Calu3 (cell line): ENCODE measurements at regions of chr11 and their contacts with region 1.

Region 1: DNA sequence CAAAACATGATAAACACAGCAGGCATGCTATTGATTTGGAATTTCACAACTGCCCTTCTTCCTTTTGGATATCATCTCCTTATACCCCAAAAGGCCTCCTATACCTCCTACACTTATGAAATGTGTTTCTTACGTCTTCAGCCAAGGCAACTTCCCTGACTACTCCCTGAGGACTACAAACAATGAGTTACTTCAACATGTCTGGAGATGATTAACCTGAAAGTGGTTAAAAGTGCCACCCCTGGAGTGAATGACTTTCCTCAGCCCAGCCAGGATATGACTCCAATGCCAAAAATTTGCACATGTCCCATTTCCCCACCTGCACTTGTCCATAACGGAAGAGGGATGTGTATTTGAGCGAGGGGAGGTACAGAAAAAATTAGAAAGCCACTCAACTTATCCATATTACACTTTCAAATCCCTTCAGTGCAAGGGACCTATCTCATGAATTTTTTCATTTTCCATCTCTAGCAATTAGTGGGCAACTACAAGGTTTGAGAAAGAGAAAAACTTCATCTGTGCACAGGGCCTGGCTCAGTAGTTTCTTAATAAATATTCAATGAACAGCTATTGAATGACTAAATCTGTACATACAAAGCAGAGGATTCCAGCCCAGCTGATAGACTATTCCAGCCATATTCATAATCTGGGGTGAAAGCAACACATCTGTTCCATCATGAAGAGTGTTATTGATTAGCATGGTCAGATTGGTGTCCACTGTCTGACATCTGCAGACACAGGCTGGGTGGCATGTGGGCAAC is 36.8 kb downstream of the KIRREL3 start:
- DNase-seq: peak; percentile 59
- H3K4me3 Mint-ChIP-seq: peak overlapping the region; percentile 54
- H3K27ac Mint-ChIP-seq: peak overlapping the region; percentile 98
- H3K4me1 Mint-ChIP-seq: peaks cover 45% of the 10 kb centered on the region
- H3K27me3 Mint-ChIP-seq: no peaks in the 10 kb centered on the region
- CTCF ChIP-seq: no peak

Region 2: DNA sequence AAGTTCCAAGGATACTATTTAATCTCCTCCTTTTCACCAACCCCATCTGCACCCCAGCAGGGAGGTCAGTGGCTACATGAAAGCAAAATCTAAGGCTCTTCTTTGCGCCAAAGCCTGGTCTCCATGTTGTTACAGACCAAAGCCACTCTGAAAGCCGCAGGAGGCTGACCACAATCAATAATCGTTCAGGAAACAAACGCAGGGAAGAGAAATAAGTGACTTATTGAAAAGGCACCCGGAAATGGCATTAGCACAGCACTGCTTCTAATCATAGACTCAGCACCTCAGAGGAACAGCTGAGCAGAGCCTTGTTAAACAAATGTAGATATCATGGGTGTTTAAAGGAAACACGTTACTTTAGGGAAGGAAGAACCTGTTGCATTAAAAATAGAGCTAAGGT is 147.1 kb before region 1 on chr11:
- CTCF ChIA-PET with region 1: no interaction called
- intact Hi-C with region 1: loop called (anchors 2 kb)
- DNase-seq: peak; percentile 58
- H3K4me3 Mint-ChIP-seq: peak overlapping the region; percentile 52
- H3K27ac Mint-ChIP-seq: peak overlapping the region; percentile 94
- H3K4me1 Mint-ChIP-seq: peaks cover 23% of the 10 kb centered on the region
- H3K27me3 Mint-ChIP-seq: no peaks in the 10 kb centered on the region
- CTCF ChIP-seq: no peak

Region 3: GRCh38 chr11:126874831-126875230 is 89.0 kb before region 1 on chr11:
- CTCF ChIA-PET with region 1: no interaction called
- intact Hi-C with region 1: loop called (anchors 5 kb)
- DNase-seq: no peak
- H3K4me3 Mint-ChIP-seq: no peak overlapping the region
- H3K27ac Mint-ChIP-seq: no peak overlapping the region
- H3K4me1 Mint-ChIP-seq: peaks cover 17% of the 10 kb centered on the region
- H3K27me3 Mint-ChIP-seq: no peaks in the 10 kb centered on the region
- CTCF ChIP-seq: no peak

Region 4: GRCh38 chr11:127149410-127149809 is 185.6 kb after region 1 on chr11:
- CTCF ChIA-PET with region 1: no interaction called
- intact Hi-C with region 1: no loop called
- DNase-seq: no peak
- H3K4me3 Mint-ChIP-seq: no peak overlapping the region
- H3K27ac Mint-ChIP-seq: no peak overlapping the region
- H3K4me1 Mint-ChIP-seq: no peaks in the 10 kb centered on the region
- H3K27me3 Mint-ChIP-seq: no peaks in the 10 kb centered on the region
- CTCF ChIP-seq: no peak